PC-3 (cell line): ENCODE measurements at regions of chr10 and their contacts with region 1.

Region 1: DNA sequence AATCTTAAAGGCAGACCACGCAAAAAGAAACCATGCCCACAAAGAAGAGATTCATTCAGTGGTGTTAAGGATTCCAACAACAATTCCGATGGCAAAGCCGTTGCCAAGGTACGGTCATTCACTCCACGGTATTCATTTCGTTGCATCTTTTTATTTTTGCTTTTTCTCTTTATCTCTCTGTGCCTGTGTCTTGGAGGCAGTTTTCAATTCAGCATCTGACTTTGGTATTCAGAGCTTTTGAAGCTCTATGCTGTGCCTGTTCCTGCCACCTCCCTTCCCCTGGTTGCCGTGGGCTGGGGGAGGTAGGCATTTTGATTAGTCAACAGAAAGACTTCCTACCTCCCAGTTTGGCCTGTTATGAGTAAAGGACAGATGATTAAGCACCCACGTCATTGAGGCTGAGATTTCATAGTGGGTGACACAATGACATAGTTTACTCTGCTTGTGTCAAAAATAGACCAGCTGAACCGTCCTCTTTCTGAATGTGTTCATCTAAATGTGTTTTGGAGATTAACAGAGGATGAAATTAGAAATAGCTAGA is 149.5 kb downstream of the ARID5B start:
- DNase-seq: peak; percentile 100
- ATAC-seq: peak; percentile 41
- H3K4me3 ChIP-seq: peak overlapping the region; percentile 63
- H3K27ac ChIP-seq: peak overlapping the region; percentile 77
- H3K4me1 ChIP-seq: peaks cover 60% of the 10 kb centered on the region
- H3K27me3 ChIP-seq: no peaks in the 10 kb centered on the region
- CTCF ChIP-seq: no peak

Region 2: GRCh38 chr10:60816628-60817397 is 1234.2 kb before region 1 on chr10:
- CTCF ChIA-PET with region 1: no interaction called
- POLR2A ChIA-PET with region 1: no interaction called
- intact Hi-C with region 1: loop called (anchors 10 kb)
- DNase-seq: peak; percentile 97
- ATAC-seq: peak; percentile 93
- H3K4me3 ChIP-seq: no peak overlapping the region
- H3K27ac ChIP-seq: no peak overlapping the region
- H3K4me1 ChIP-seq: peaks cover 6% of the 10 kb centered on the region; the same call in 1 of the 2 replicates
- H3K27me3 ChIP-seq: no peaks in the 10 kb centered on the region
- CTCF ChIP-seq: peak; percentile 100

Region 3: GRCh38 chr10:61896854-61897661 is 153.9 kb before region 1 on chr10:
- CTCF ChIA-PET with region 1: interaction called, 3 read pairs
- POLR2A ChIA-PET with region 1: interaction called, 16 read pairs
- intact Hi-C with region 1: no loop called
- DNase-seq: peak; percentile 91
- ATAC-seq: no peak; the same call in 1 of the 2 replicates
- H3K4me3 ChIP-seq: no peak overlapping the region
- H3K27ac ChIP-seq: no peak overlapping the region
- H3K4me1 ChIP-seq: peaks cover 38% of the 10 kb centered on the region
- H3K27me3 ChIP-seq: no peaks in the 10 kb centered on the region
- CTCF ChIP-seq: peak; percentile 99

Region 4: DNA sequence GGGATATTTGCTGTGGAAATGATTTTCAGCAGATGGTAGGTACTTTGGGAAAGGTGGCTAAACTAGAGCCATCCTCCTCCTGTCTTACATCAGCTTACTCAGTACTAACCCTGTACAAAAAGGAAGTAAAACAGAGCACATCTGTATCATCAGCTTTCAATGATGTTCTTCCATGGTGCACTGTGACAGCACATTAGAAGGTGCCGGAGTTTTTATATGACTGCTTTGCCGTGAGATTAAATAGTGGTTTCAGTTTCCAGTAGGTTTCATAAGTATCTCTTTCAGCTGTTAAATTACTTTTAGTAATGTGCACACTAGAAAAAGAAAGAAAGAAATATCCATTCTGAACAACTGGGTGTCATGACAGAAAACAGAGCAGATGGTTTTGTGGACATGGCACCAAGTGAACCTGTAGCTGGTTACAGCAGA is 63.0 kb before region 1 on chr10:
- CTCF ChIA-PET with region 1: no interaction called
- POLR2A ChIA-PET with region 1: no interaction called
- intact Hi-C with region 1: no loop called
- DNase-seq: no peak
- ATAC-seq: peak; percentile 27; the same call in 1 of the 2 replicates
- H3K4me3 ChIP-seq: no peak overlapping the region
- H3K27ac ChIP-seq: no peak overlapping the region
- H3K4me1 ChIP-seq: no peaks in the 10 kb centered on the region
- H3K27me3 ChIP-seq: no peaks in the 10 kb centered on the region
- CTCF ChIP-seq: no peak

Region 5: DNA sequence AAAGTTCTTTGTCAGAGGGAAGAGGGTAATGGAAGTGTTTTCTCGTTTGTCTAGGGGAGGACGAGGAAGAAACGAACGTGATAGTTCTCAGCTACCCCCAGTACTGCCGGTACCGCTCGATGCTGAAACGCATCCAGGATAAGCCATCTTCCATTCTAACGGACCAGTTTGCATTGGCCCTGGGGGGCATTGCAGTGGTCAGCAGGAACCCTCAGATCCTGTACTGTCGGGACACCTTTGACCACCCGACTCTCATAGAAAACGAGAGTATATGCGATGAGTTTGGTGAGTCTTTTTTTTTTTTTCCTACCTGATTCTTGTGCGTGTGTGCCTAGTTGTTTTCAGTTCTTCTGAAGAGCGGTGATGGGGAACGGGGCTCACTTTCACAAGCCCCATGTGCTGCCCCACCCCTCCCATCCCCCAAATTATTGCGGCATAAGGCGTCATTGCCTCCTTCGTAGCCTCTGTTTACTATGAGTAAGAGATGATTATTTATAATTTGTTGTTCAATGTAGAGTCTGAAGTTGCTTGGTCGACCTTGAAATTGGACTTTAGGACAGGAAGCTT is 50.8 kb before region 1 on chr10:
- CTCF ChIA-PET with region 1: no interaction called
- POLR2A ChIA-PET with region 1: no interaction called
- intact Hi-C with region 1: no loop called
- DNase-seq: no peak
- ATAC-seq: no peak
- H3K4me3 ChIP-seq: no peak overlapping the region
- H3K27ac ChIP-seq: no peak overlapping the region
- H3K4me1 ChIP-seq: no peaks in the 10 kb centered on the region
- H3K27me3 ChIP-seq: no peaks in the 10 kb centered on the region
- CTCF ChIP-seq: no peak

Region 6: DNA sequence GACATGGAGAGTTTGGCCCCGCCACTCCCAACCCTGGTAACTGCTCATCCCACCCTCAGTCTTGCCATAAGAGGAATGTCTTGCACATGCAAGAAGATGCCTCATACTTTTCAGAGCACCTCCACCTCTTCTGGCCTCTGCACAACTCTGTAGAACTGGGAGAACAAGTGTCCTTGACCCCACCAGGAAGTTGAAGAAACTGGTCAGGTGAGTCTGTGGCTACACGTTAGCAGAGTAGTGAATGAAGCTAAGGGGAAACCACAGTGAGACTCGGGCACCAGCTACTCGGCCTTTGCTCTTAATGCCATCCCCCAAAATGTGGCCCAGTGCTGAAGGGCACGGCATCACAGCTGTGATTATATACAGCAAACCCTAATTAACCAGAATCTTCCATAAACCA is 39.4 kb before region 1 on chr10:
- CTCF ChIA-PET with region 1: no interaction called
- POLR2A ChIA-PET with region 1: no interaction called
- intact Hi-C with region 1: no loop called
- DNase-seq: peak; percentile 54
- ATAC-seq: peak; percentile 39; the same call in 1 of the 2 replicates
- H3K4me3 ChIP-seq: no peak overlapping the region
- H3K27ac ChIP-seq: no peak overlapping the region
- H3K4me1 ChIP-seq: no peaks in the 10 kb centered on the region; the same call in 1 of the 2 replicates
- H3K27me3 ChIP-seq: no peaks in the 10 kb centered on the region
- CTCF ChIP-seq: no peak

Region 7: DNA sequence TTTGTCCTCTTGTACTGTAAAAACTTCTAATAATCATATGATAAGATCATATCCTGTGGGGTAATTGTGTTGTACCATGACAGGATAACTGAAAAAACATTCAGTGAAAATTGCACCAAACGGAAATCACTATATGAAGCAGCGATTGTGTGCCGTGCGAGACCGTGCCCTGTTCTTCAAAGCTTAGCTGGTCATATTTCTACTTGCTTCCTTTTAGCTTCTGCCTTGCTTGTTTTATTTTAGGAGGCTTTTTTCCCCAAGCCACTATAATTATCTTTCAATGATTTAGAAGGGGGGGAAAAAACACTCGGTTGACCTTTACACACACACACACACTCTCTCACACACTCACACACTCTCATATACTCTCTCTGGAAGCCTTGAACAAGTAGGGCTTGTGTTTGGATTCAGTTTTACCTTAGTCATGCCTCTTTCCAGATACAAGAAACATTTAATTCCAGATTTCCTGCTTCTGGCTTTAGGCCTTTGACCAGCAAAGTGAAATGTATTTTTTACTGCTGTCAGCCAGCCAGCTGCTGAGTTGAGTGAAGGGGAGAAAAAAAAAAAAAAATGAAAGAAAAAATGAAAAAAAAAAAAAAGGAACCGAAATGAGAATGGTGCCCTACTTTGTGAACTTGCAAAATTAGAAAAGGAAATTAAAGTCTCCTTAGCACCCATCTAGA is 31.9 kb after region 1 on chr10:
- CTCF ChIA-PET with region 1: no interaction called
- POLR2A ChIA-PET with region 1: no interaction called
- intact Hi-C with region 1: loop called (anchors 1 kb)
- DNase-seq: peak; percentile 69
- ATAC-seq: peak; percentile 58
- H3K4me3 ChIP-seq: peak overlapping the region; percentile 24
- H3K27ac ChIP-seq: peak overlapping the region; percentile 54
- H3K4me1 ChIP-seq: peaks cover 53% of the 10 kb centered on the region
- H3K27me3 ChIP-seq: no peaks in the 10 kb centered on the region
- CTCF ChIP-seq: no peak

Region 8: GRCh38 chr10:62112271-62112769 is 61.4 kb after region 1 on chr10:
- CTCF ChIA-PET with region 1: no interaction called
- POLR2A ChIA-PET with region 1: interaction called, 3 read pairs
- intact Hi-C with region 1: loop called (anchors 1 kb)
- DNase-seq: peak; percentile 100
- ATAC-seq: peak; percentile 83
- H3K4me3 ChIP-seq: no peak overlapping the region
- H3K27ac ChIP-seq: peak overlapping the region; percentile 62
- H3K4me1 ChIP-seq: peaks cover 74% of the 10 kb centered on the region
- H3K27me3 ChIP-seq: no peaks in the 10 kb centered on the region
- CTCF ChIP-seq: no peak

Region 9: DNA sequence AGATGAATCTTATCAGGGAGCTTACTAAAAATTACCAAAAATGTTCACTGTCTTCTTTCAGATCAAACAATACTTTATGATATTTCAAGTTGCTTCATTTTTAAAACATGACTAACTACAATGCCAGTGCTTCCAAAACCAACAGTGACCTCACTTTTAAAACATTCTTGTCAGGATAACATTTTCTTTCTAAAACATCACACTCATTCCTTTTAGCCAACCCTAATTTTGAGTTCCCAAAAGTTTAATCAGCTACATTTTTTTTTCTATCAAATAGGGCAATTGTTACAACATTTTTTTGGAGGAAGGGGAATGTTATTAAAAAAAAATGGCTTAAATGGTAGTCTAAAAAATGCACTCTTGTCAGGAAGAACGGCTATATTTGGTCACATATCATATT is 180.4 kb after region 1 on chr10:
- CTCF ChIA-PET with region 1: interaction called, 4 read pairs
- POLR2A ChIA-PET with region 1: interaction called, 14 read pairs
- intact Hi-C with region 1: loop called (anchors 1 kb)
- DNase-seq: peak; percentile 99
- ATAC-seq: peak; percentile 76
- H3K4me3 ChIP-seq: peak overlapping the region; percentile 25
- H3K27ac ChIP-seq: peak overlapping the region; percentile 73
- H3K4me1 ChIP-seq: peaks cover 55% of the 10 kb centered on the region
- H3K27me3 ChIP-seq: no peaks in the 10 kb centered on the region
- CTCF ChIP-seq: no peak

Region 10: DNA sequence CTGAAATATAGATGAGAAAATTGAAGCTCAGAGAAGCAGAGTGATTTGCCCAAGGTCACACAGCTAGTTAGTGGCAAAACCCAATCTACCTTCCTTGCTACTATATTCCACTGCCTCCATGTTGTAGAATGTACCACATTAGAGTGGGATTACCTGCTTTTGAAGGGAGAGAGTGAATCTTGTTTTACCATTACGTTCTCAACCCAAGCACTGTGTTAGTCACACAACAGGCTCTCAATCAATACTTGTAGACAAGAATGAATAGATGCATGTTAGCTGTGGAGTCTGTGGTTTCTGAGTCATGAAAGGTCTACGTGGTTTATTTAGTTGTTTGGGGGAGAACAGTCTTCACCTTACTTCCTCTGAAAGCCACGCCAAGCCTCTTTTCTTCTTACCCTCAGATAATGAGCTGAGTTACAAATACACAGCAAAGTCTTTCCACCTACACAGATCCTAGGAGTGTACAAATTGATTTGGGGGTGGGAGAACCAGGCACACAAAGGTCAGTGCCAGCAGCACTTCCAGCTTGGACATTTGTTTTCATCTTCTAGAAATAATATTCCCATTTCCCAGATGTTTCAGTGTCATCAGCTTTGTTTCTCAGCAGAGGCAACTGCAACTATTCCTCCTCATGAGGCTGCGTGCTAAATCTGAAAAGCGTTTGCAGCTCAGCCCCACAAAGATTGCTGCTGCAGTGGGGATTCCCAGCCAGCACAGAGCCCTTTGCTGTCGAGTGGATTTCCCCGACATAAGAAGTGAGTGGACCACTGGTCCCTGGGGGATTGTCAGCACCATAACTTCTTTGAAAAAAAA is 682.1 kb after region 1 on chr10:
- CTCF ChIA-PET with region 1: no interaction called
- POLR2A ChIA-PET with region 1: no interaction called
- intact Hi-C with region 1: no loop called
- DNase-seq: peak; percentile 100
- ATAC-seq: peak; percentile 86
- H3K4me3 ChIP-seq: peak overlapping the region; percentile 18
- H3K27ac ChIP-seq: peak overlapping the region; percentile 84
- H3K4me1 ChIP-seq: peaks cover 60% of the 10 kb centered on the region
- H3K27me3 ChIP-seq: no peaks in the 10 kb centered on the region
- CTCF ChIP-seq: no peak